H1 (cell line): ENCODE measurements at regions of chr11 and their contacts with region 1.

Region 1: GRCh38 chr11:41245702-41246398 is 213.6 kb downstream of the LRRC4C start:
- DNase-seq: peak in 1 of 2 experiments; percentile 45
- H3K4me3 ChIP-seq: no peak overlapping the region
- H3K27ac ChIP-seq: no peak overlapping the region
- H3K4me1 ChIP-seq: no peaks in the 10 kb centered on the region
- H3K27me3 ChIP-seq: no peaks in the 10 kb centered on the region
- CTCF ChIP-seq: peak; percentile 25 to 44 (median 39); a peak in 3 of 4 replicates
- EP300 ChIP-seq: no peak
- POLR2A ChIP-seq: no peak
- RAD21 ChIP-seq: peak; percentile 54 to 67

Region 2: DNA sequence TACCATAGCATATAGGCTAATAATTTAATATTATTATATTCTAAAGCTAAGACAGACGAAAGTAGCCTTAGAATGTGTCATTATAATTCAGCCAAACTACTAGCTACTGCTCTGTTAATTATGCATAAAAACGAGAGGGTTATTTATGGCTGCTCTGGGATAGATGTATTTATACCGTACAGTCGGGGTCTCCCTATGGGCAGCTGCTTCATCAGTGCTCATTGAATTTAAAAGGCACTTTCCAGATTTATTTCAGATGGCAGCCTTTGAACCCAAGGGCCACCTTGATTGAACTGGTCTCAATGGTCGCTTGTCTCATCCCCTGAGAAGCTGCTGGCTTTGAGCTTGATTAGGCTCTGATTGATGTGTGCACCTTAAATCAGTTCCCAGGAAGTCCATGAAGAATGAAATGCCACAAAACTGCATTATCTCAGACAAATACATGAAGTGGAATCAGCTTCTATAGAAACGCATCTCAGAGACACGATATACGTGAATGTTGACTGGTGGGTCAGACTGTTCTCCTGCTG is 164.0 kb before region 1 on chr11:
- CTCF ChIA-PET with region 1: no interaction called
- POLR2A ChIA-PET with region 1: no interaction called
- DNase-seq: no peak
- H3K4me3 ChIP-seq: no peak overlapping the region
- H3K27ac ChIP-seq: no peak overlapping the region
- H3K4me1 ChIP-seq: peaks cover 0 to 5% (median 0%) of the 10 kb centered on the region in 4 experiments; a peak in 1 of 7 replicates
- H3K27me3 ChIP-seq: no peaks in the 10 kb centered on the region
- CTCF ChIP-seq: no peak
- EP300 ChIP-seq: no peak
- POLR2A ChIP-seq: no peak
- RAD21 ChIP-seq: no peak

Region 3: DNA sequence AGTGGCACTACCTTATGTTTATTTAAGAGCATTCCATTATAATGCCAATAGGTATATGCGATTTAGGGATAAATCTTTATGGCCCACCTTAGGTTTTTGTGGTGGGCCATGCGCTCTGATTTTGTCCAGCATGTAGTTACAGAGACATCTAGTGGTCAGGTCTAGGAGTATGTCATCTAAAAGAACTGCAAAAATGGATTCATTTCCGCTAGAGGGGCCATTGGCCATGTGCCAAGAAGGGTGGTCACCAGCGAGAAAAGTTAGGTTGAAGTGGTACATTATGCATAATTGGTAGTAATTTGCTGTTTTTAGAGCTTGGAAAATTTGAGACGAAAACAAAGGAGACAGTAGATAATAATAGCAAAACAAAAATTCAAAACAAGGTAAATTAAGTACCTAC is 185.9 kb after region 1 on chr11:
- CTCF ChIA-PET with region 1: interaction called, 23 read pairs
- POLR2A ChIA-PET with region 1: no interaction called
- DNase-seq: no peak
- H3K4me3 ChIP-seq: no peak overlapping the region
- H3K27ac ChIP-seq: no peak overlapping the region
- H3K4me1 ChIP-seq: peaks cover 0 to 3% (median 1%) of the 10 kb centered on the region in 4 experiments; a peak in 2 of 7 replicates
- H3K27me3 ChIP-seq: no peaks in the 10 kb centered on the region
- CTCF ChIP-seq: peak in 2 of 3 experiments; percentile 65 to 72; a peak in 3 of 4 replicates
- EP300 ChIP-seq: no peak
- POLR2A ChIP-seq: no peak
- RAD21 ChIP-seq: peak; percentile 91 to 93